ENCODE measurements at regions of chr20 and their contacts with region 1.

Region 1: GRCh38 chr20:8800089-8800488 is 268.8 kb upstream of the PLCB4 start:
- DNase-seq: no peak
- ATAC-seq: no peak
- H3K4me3 ChIP-seq: no peak overlapping the region
- H3K27ac ChIP-seq: no peak overlapping the region
- H3K4me1 ChIP-seq: no peaks in the 10 kb centered on the region
- H3K27me3 ChIP-seq: no peaks in the 10 kb centered on the region
- CTCF ChIP-seq: no peak

Region 2: GRCh38 chr20:8399947-8400346 is 400.1 kb before region 1 on chr20:
- intact Hi-C with region 1: no loop called
- DNase-seq: no peak
- ATAC-seq: no peak
- H3K4me3 ChIP-seq: no peak overlapping the region
- H3K27ac ChIP-seq: no peak overlapping the region
- H3K4me1 ChIP-seq: peaks cover 12% of the 10 kb centered on the region
- H3K27me3 ChIP-seq: no peaks in the 10 kb centered on the region
- CTCF ChIP-seq: no peak

Region 3: DNA sequence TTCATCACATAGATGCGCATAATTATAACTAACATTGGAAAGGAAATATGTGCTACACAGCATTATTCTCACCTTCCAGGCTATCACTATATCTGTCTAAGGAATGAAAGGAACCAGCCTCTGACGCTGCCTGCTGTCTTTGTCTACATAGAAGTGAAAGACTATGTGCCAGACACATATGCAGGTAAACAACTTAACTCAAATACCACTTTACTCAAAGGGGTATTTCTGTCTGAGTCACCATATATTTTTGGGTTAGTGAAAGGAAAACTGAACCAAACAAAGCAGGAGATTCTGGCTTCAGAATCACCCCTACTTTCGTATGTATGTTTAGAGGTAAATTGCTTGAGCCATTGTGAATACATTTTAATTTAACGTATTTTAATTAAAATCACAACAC is 59.8 kb before region 1 on chr20:
- intact Hi-C with region 1: loop called in 1 of 2 experiments (anchors 10 kb)
- DNase-seq: no peak
- ATAC-seq: no peak
- H3K4me3 ChIP-seq: no peak overlapping the region
- H3K27ac ChIP-seq: no peak overlapping the region
- H3K4me1 ChIP-seq: no peaks in the 10 kb centered on the region
- H3K27me3 ChIP-seq: no peaks in the 10 kb centered on the region
- CTCF ChIP-seq: no peak

Measured in psoas muscle (tissue), 8 donors.